Sciatic nerve (tissue), 2 donors: ENCODE measurements at regions of chr6 and their contacts with region 1.

Region 1: DNA sequence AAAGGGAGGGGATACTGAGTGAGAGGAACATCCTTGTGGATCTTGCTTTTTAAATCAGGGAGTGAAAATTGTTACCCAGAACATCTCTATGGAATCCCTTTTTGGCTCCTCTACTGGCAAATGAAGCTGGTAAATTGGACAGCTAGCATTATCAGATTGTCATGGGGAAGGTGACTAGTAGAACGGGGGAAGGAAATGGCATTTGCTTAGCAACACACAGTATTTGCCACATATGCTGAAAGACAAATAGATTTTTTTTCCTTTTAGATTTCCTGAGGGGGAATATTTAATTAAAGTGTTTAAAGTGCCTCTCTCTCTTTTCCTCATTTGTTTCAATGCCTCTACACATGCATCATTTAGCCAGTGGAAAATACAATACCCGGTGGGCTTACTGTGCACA is 573.5 kb downstream of the BCKDHB start:
- DNase-seq: no peak
- ATAC-seq: no peak

Region 2: DNA sequence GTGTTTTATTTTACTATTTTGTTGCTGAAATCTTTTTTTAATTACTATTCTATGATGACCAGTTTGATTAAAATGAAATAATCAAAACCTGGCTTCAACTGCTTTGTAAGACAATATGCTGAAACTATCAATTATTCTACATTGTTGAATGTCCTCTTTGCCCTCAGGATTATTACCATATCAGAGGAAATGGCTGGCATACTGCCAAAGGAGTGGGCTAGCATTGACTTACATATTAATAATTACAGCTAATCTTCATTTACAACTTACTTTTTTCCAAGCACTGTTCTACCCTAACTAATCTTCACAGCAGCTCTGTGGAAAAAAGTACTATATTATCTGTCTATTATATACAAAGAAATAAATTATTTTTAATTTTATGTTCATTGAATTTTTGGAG is 13.0 kb before region 1 on chr6:
- intact Hi-C with region 1: loop called (anchors 1 kb)
- DNase-seq: no peak
- ATAC-seq: no peak

Region 3: GRCh38 chr6:82494367-82494766 is 1814.4 kb after region 1 on chr6:
- intact Hi-C with region 1: no loop called
- DNase-seq: no peak
- ATAC-seq: no peak